Activated CD4-positive, alpha-beta T cell treated with anti-CD3 and anti-CD28 coated beads, Interleukin-2, amount 10 ng/mL, durations not matched to agents 24 days and 14 days (primary cell): ENCODE measurements at regions of chr20 and their contacts with region 1.

Region 1: GRCh38 chr20:5205348-5206210 is 78.8 kb downstream of the CDS2 start:
- DNase-seq: peak; percentile 91
- H3K4me3 Mint-ChIP-seq: no peak overlapping the region
- H3K27ac Mint-ChIP-seq: no peak overlapping the region
- H3K4me1 Mint-ChIP-seq: peaks cover 5% of the 10 kb centered on the region
- H3K27me3 Mint-ChIP-seq: no peaks in the 10 kb centered on the region

Region 2: DNA sequence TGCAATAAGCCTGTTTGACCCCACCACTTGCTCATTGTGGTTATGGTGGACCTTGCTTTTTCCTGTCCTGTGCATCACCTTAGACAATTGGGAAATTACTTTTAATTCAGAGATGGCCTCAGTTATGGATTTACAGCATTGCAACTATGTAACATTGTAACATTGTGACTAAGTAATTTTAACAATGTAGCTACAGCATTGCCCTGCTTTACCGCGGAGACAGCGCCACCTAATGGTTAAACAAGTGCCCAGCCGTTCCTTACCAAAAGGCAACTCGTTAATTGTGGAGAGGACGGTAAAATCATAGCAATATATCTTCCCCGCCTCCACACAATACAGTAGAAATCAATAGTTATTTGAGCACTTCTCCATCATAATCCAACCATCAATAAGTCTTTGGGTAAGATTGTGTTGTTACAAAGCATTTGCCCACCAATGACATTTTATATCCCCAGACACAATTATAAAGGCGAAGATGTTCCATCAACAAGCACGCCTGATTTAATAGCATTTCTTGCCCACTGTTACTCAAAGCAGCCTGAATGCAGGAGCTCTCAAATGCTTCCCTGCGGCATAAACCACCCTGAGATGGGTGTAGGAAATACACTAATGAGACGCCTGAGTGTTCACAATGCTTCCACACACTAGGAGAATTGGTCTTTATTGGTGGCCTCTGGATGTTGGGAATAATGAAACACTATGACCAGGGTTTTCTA is 17.5 kb after region 1 on chr20:
- intact Hi-C with region 1: loop called (anchors 1 kb)
- DNase-seq: peak; percentile 87
- H3K4me3 Mint-ChIP-seq: no peak overlapping the region
- H3K27ac Mint-ChIP-seq: no peak overlapping the region
- H3K4me1 Mint-ChIP-seq: peaks cover 3% of the 10 kb centered on the region
- H3K27me3 Mint-ChIP-seq: no peaks in the 10 kb centered on the region

Region 3: DNA sequence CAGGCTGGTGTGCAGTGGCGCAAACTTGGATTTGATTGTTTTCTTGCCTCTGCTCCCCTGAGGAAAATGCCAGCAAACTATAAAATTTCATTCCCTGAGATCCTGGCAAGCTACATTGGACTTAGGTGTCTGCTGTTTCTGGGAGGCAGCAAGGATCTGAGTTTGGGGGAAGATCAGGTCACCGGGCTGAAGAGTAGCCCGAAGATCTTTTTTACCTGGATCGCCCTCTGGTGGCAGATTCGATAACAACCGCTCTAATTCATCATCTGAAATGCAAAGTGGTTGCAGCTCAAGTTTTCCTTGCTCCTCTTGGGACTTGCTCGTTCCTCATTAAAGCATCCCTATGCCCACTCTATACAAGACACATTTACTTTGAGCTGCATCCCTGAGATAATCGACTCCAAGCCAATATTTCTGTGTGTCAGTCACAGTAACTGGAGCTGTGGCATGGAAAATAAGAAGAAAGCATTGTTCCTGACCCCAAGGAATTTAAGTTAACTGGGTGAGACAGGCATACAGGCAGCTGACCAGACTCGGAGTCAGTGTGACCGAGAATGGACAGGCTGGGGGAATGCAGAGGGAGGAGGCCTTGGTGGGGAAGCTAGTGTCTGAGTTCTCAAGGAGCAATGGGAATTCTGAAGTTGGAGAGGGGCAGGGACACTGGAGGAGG is 243.0 kb after region 1 on chr20:
- intact Hi-C with region 1: loop called (anchors 1 kb)
- DNase-seq: peak; percentile 83
- H3K4me3 Mint-ChIP-seq: no peak overlapping the region
- H3K27ac Mint-ChIP-seq: no peak overlapping the region
- H3K4me1 Mint-ChIP-seq: peaks cover 3% of the 10 kb centered on the region
- H3K27me3 Mint-ChIP-seq: peaks cover 10% of the 10 kb centered on the region

Region 4: GRCh38 chr20:5580936-5581708 is 375.5 kb after region 1 on chr20:
- intact Hi-C with region 1: no loop called
- DNase-seq: no peak
- H3K4me3 Mint-ChIP-seq: no peak overlapping the region
- H3K27ac Mint-ChIP-seq: no peak overlapping the region
- H3K4me1 Mint-ChIP-seq: peaks cover 10% of the 10 kb centered on the region
- H3K27me3 Mint-ChIP-seq: no peaks in the 10 kb centered on the region